ENCODE measurements at regions of chr12 and their contacts with region 1.

Region 1: DNA sequence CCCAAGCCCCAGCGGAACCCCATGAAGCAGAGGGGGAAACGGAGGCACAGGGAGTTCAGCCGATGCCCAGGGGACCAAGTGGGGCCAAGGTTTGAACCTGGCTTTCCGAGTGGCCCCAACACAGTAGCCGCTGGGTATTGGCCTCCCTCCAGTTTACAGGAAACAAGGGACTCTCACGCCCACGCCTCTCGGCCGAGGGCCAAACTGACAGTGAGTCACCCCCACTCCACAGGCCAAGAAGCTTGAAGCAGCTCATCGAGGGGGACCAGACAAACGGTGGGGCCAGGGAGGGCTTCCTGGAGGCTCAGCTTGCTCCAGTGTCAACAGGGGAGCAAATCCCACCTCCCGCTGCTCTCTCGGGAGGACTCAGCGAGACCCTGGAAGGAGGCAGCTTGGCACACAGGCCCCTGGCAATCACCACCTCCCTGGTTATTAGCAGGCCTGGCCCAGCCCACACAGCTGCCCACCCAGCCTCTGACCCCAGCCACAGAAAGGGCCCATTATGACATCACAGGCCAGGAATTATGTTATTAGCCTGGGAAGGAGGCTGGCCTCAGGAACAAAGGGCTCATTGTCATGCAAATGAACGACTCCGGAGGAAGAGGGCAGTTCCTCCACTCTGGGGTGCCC is 54.6 kb downstream of the NCOR2 start:
- DNase-seq: peak; percentile 89 to 92
- H3K4me3 ChIP-seq: peak overlapping the region; percentile 39; the same call in 1 of the 2 replicates
- H3K27ac ChIP-seq: peak overlapping the region; percentile 77
- H3K4me1 ChIP-seq: peaks cover 79% of the 10 kb centered on the region
- H3K27me3 ChIP-seq: no peaks in the 10 kb centered on the region
- CTCF ChIP-seq: no peak

Region 2: DNA sequence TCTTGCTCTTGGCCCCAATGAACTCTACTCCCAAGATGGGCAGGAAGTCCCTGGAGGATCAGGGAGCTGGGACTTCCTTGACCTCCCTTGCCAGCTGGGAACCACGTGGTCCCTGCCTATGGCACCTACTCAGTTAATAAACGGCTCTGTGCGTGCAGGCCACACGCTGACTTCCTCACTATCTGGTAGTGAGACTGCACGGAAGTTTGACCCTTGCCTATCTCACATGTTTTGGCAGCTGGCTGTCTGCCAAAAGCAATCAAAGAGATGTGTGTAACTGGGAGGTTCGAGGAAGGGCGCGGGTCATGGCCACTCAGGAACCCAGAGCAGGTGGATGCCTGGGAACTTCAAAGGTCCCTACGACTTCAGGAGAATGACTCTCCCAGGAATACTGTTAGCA is 159.9 kb before region 1 on chr12:
- CTCF ChIA-PET with region 1: no interaction called
- POLR2A ChIA-PET with region 1: no interaction called
- intact Hi-C with region 1: no loop called
- DNase-seq: no peak
- H3K4me3 ChIP-seq: no peak overlapping the region
- H3K27ac ChIP-seq: no peak overlapping the region
- H3K4me1 ChIP-seq: no peaks in the 10 kb centered on the region
- H3K27me3 ChIP-seq: no peaks in the 10 kb centered on the region
- CTCF ChIP-seq: no peak

Region 3: DNA sequence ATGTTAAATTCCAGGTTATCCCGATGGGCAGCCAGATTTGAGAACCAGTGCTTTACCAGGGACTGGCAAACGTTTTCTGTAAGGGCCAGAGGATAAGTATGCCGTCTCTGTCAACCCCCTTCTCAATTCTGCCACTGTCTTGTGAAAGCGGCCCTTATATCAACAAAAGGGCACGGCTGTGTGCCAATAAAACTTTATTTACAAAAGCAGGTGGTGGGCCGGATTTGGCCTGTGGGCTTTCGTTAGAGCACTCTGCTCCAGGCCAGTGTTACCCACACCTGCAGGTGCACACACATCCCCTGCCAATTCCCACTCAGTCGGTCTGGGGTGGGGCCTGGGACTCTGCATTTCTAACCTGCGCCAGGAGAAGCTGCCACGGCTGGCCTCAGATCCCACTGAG is 106.7 kb before region 1 on chr12:
- CTCF ChIA-PET with region 1: interaction called, 17 read pairs
- POLR2A ChIA-PET with region 1: no interaction called
- intact Hi-C with region 1: no loop called
- DNase-seq: no peak
- H3K4me3 ChIP-seq: no peak overlapping the region
- H3K27ac ChIP-seq: no peak overlapping the region
- H3K4me1 ChIP-seq: no peaks in the 10 kb centered on the region
- H3K27me3 ChIP-seq: no peaks in the 10 kb centered on the region
- CTCF ChIP-seq: no peak